Mammary epithelial cell (primary cell): ENCODE measurements at regions of chr11 and their contacts with region 1.

Region 1: DNA sequence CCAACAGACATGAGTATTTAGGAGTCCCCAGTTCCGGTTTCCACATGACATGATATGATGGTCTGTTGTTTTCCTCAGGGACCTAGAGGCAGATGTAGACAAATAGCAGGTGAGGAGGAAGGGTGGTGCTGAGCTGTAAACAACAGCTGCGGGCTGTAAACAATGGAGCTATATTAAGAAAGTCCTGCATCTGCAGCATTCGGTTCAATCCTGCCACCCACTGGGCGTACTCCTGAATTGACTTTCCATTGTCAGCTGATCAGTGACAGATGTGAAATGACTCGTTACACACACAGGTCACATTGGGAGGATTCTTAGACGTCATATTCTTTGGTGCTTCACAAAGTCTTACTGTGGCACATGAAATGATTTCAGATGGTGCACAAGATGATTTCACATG is 26.8 kb upstream of the RAG1 start:
- DNase-seq: peak; percentile 53
- H3K4me3 ChIP-seq: no peak overlapping the region
- H3K27ac ChIP-seq: no peak overlapping the region
- H3K4me1 ChIP-seq: no peaks in the 10 kb centered on the region
- H3K27me3 ChIP-seq: peaks cover 6% of the 10 kb centered on the region
- CTCF ChIP-seq: peak; percentile 27 to 40

Region 2: GRCh38 chr11:36289226-36289852 is 251.7 kb before region 1 on chr11 and contains the start of gene COMMD9:
- CTCF ChIA-PET with region 1: no interaction called
- dilution Hi-C with region 1: no loop called
- in situ Hi-C with region 1: no loop called
- intact Hi-C with region 1: loop called (anchors 1 kb)
- DNase-seq: peak; percentile 91
- H3K4me3 ChIP-seq: peak within 1 kb of the TSS; percentile 66 to 97 (median 94)
- H3K27ac ChIP-seq: peak within 1 kb of the TSS; percentile 48
- H3K4me1 ChIP-seq: peaks cover 13% of the 10 kb centered on the region
- H3K27me3 ChIP-seq: no peaks in the 10 kb centered on the region
- CTCF ChIP-seq: no peak
- total RNA-seq, gene COMMD9: 30.7 to 46.5 TPM